Left colon (tissue), 2 donors: ENCODE measurements at regions of chr16 and their contacts with region 1.

Region 1: DNA sequence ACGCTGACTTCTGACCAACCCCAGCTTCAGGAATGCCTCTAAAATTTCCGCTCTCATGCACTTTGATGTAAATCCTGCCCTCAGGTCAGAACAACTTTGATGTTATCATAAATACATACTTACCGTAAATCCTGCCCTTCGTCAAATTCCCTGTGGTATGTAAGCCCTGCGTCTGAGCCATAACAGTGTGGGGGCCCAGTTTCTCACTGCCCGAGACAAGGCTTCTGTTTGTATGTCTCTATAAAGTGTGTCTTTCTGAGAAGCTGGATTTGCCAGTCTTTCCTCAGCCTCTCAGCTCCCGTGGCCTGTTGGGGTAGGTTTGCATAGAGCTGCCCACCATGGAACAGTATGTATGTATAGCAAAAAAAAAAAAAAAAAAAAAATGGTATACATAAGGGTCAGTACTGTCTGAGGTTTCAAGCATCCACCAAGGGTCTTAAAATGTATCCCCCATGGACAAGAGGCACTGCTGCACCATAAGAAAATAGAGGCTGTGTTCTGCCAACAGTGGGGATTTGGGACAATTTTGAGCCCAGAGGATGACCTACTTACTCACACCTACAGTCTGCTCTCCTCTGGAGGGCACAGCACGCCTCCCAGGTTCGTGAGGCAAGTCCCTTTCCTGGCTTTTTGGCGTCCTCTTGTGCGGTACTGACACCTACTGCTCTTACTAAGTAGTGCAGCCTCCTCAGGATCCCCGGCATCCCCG is 17.5 kb downstream of the PRMT7 start:
- DNase-seq: peak; percentile 68 to 78
- ATAC-seq: peak; percentile 99

Region 2: GRCh38 chr16:68214726-68215125 is 113.6 kb before region 1 on chr16:
- intact Hi-C with region 1: no loop called
- DNase-seq: no peak
- ATAC-seq: no peak

Region 3: GRCh38 chr16:68244903-68245853 is 83.1 kb before region 1 on chr16 and contains the start of gene PLA2G15:
- intact Hi-C with region 1: loop called in 1 of 2 experiments (anchors 5 kb)
- DNase-seq: peak; percentile 97 to 99
- ATAC-seq: peak; percentile 95
- total RNA-seq, gene PLA2G15: 15.1 to 15.5 TPM

Region 4: GRCh38 chr16:68478526-68479250 is 150.4 kb after region 1 on chr16:
- intact Hi-C with region 1: no loop called
- DNase-seq: no peak
- ATAC-seq: no peak